AG04450 (cell line): ENCODE measurements at regions of chr20 and their contacts with region 1.

Region 1: DNA sequence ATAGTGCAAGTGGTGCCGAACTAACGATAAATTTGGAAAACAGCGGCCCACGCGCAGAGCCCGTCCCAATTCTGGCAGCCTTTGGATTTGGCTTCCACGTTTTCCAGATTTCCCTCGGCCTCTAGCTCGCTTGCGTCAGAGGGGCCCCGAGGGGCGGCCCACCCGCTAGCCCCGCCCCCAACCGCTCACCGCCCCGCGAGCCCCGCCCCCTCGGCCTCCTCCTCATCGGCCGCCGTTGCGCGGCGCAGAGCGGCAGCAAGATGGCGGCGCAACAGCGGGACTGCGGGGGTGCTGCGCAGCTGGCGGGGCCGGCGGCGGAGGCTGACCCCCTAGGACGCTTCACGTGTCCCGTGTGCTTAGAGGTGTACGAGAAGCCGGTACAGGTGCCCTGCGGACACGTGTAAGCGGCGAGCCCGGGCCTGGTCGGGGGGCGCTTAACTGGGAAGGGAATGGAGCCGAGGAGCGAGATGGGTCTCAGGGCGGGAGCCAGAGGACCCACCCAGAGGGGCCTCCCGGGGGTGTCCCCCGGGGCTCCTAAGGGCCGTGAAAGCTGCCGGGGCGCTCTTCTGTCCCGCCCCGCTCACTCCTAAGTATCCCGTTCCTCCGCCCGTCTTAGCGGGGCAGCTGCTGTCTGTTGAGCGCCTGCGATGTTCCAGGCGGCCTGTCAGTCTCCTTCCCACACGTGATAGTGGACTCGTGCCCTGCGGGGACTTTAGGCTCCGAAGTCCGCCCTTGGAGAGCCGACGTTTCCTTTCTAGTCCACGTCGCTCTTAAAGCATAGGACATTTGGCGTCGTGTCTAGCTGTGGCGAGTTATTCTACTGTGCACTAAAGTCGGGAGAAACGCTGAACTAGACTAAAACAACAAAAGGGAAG is at the start of gene RNF114:
- DNase-seq: peak; percentile 67
- H3K4me3 ChIP-seq: peak within 1 kb of the TSS; percentile 96
- H3K27ac ChIP-seq: peak within 1 kb of the TSS; percentile 81
- H3K27me3 ChIP-seq: no peaks in the 10 kb centered on the region
- CTCF ChIP-seq: no peak
- polyA plus RNA-seq, gene RNF114: 69.6 and 87.4 TPM in 2 replicates

Region 2: GRCh38 chr20:49948809-49949548 is 12.6 kb after region 1 on chr20:
- CTCF ChIA-PET with region 1: no interaction called
- POLR2A ChIA-PET with region 1: interaction called, 21 read pairs
- DNase-seq: peak; percentile 92
- H3K4me3 ChIP-seq: no peak overlapping the region
- H3K27ac ChIP-seq: peak overlapping the region; percentile 100
- H3K27me3 ChIP-seq: no peaks in the 10 kb centered on the region
- CTCF ChIP-seq: no peak

Region 3: DNA sequence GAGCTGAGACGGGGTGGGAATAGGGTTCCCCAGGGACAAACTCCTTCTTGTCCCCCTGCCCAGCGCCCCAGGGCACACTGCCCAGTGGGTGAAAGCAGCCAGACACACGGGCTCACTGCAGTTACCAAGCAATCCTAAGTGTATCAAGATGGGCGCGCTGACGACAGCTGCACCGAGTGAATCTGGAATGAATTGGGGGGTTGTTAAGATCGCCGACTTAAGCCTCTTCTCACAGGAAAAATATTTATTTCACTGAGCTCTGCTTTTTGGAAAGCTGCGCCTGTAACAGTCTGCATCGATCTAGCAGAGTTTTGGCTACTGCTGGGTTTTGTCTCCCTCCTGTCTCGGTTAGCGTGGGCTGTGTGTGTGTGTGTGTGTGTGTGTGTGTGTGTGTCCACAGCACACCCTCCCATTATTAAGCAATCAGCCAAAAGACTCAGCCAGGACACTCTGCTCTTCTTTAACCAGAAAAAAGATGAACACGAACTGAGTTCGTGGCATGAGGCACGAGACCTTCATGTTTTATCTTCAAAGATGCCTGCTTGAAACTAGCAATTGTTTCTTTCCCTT is 719.0 kb after region 1 on chr20:
- CTCF ChIA-PET with region 1: no interaction called
- POLR2A ChIA-PET with region 1: interaction called, 11 read pairs
- DNase-seq: peak; percentile 93
- H3K4me3 ChIP-seq: peak overlapping the region; percentile 12; the same call in 1 of the 2 replicates
- H3K27ac ChIP-seq: peak overlapping the region; percentile 97
- H3K27me3 ChIP-seq: no peaks in the 10 kb centered on the region
- CTCF ChIP-seq: no peak